ENCODE measurements at regions of chr1 and their contacts with region 1.

Region 1: GRCh38 chr1:165592945-165593823 is 37.9 kb upstream of the MGST3 start:
- DNase-seq: peak in 2 of 3 donors; percentile 32 to 92
- ATAC-seq: peak; percentile 75
- H3K4me3 ChIP-seq: no peak overlapping the region
- H3K4me1 ChIP-seq: no peaks in the 10 kb centered on the region
- CTCF ChIP-seq: peak; percentile 85

Region 2: GRCh38 chr1:165392634-165393571 is 200.3 kb before region 1 on chr1:
- intact Hi-C with region 1: loop called (anchors 1 to 5 kb)
- DNase-seq: peak; percentile 84 to 90 (median 85)
- ATAC-seq: peak; percentile 97
- H3K4me3 ChIP-seq: no peak overlapping the region
- H3K4me1 ChIP-seq: peaks cover 10% of the 10 kb centered on the region
- CTCF ChIP-seq: peak; percentile 92

Region 3: GRCh38 chr1:165481820-165482532 is 111.2 kb before region 1 on chr1:
- intact Hi-C with region 1: no loop called
- DNase-seq: peak in 1 of 3 donors; percentile 15
- ATAC-seq: peak; percentile 73
- H3K4me3 ChIP-seq: no peak overlapping the region
- H3K4me1 ChIP-seq: no peaks in the 10 kb centered on the region
- CTCF ChIP-seq: no peak